ENCODE measurements at regions of chr19 and their contacts with region 1.

Region 1: GRCh38 chr19:7381073-7381390 is 32.3 kb downstream of the ARHGEF18 start:
- DNase-seq: no peak
- ATAC-seq: no peak
- H3K4me3 Mint-ChIP-seq: no peak overlapping the region
- H3K27ac Mint-ChIP-seq: peak overlapping the region; percentile 67
- H3K4me1 Mint-ChIP-seq: peaks cover 2% of the 10 kb centered on the region
- H3K27me3 Mint-ChIP-seq: no peaks in the 10 kb centered on the region
- CTCF ChIP-seq: no peak

Region 2: GRCh38 chr19:7360393-7360984 is 20.5 kb before region 1 on chr19:
- CTCF ChIA-PET with region 1: interaction called, 28 read pairs
- POLR2A ChIA-PET with region 1: interaction called, 3 read pairs
- intact Hi-C with region 1: no loop called
- DNase-seq: no peak
- ATAC-seq: peak; percentile 34
- H3K4me3 Mint-ChIP-seq: no peak overlapping the region
- H3K27ac Mint-ChIP-seq: peak overlapping the region; percentile 41
- H3K4me1 Mint-ChIP-seq: peaks cover 54% of the 10 kb centered on the region
- H3K27me3 Mint-ChIP-seq: no peaks in the 10 kb centered on the region
- CTCF ChIP-seq: no peak

Region 3: DNA sequence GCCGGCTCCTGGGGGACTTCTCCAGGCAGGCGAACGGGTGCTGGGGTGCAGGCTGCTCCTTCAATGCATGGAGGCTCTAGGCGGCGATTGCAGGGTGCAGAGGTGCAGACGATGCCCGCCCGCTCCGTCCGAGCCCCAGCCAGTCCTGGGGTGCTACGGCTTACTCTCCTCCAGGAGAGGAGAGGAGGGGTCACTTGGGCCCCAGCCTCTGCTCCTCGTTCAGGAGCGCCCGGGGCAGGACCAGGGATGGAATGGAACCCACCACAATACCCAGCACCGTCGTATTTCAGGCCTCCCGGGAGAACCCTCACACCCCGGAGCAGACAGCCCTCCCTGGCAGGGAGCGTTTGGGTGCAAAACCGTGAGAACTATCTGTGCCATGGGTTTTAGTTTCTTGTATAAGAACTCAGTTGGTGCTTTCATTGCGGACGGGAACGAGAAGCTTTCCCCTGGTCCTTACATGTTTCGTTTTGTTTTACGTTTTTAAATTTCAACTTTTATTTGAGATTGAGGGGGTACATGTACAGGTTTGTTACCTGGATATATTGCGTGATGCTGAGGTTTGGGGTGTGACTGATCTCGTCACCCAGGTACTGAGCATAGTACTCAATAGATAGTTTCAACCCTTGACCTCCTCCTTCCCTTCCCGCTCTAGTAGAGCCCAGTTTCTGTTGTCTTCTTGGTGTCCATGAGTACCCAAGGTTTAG is 14.5 kb after region 1 on chr19:
- CTCF ChIA-PET with region 1: interaction called, 10 read pairs
- POLR2A ChIA-PET with region 1: interaction called, 5 read pairs
- intact Hi-C with region 1: no loop called
- DNase-seq: peak; percentile 19
- ATAC-seq: peak; percentile 34
- H3K4me3 Mint-ChIP-seq: peak overlapping the region; percentile 84
- H3K27ac Mint-ChIP-seq: peak overlapping the region; percentile 74
- H3K4me1 Mint-ChIP-seq: peaks cover 39% of the 10 kb centered on the region
- H3K27me3 Mint-ChIP-seq: no peaks in the 10 kb centered on the region
- CTCF ChIP-seq: no peak

Measured in activated CD8-positive, alpha-beta T cell treated with anti-CD3 and anti-CD28 coated beads for 36 hours (primary cell).